CD14-positive monocyte (primary cell): ENCODE measurements at regions of chr17 and their contacts with region 1.

Region 1: GRCh38 chr17:35981908-35982330 is 622 bp upstream of the CCL16 start:
- DNase-seq: no peak
- H3K4me3 ChIP-seq: no peak overlapping the region
- H3K4me3 Mint-ChIP-seq: no peak overlapping the region
- H3K27ac ChIP-seq: no peak overlapping the region
- H3K27ac Mint-ChIP-seq: no peak overlapping the region
- H3K4me1 ChIP-seq: no peaks in the 10 kb centered on the region
- H3K4me1 Mint-ChIP-seq: no peaks in the 10 kb centered on the region
- H3K27me3 ChIP-seq: no peaks in the 10 kb centered on the region
- H3K27me3 Mint-ChIP-seq: peaks cover 0 to 3% (median 0%) of the 10 kb centered on the region in 3 donors
- CTCF ChIP-seq: no peak

Region 2: DNA sequence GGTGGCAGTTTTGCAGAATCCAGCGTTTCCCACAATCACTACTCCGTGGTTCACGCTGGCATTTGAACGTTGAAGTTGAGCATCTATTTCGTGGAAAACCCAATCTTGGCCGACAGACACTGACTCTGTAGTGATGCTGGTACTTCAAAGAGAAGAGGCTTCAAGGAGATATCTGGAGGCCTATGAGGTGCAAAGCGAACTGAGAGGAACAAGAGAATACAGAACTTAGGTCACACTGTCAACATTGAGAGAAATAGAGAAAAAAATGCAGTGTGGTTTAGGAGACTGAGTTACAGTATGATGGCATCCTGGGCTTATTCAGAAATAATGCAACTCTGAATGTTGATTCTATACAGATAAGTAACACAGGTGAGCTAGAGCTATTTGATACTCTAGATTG is 16.6 kb before region 1 on chr17:
- intact Hi-C with region 1: no loop called
- DNase-seq: no peak
- H3K4me3 ChIP-seq: no peak overlapping the region
- H3K4me3 Mint-ChIP-seq: no peak overlapping the region
- H3K27ac ChIP-seq: no peak overlapping the region
- H3K27ac Mint-ChIP-seq: no peak overlapping the region
- H3K4me1 ChIP-seq: no peaks in the 10 kb centered on the region
- H3K4me1 Mint-ChIP-seq: peaks cover 4% of the 10 kb centered on the region
- H3K27me3 ChIP-seq: no peaks in the 10 kb centered on the region
- H3K27me3 Mint-ChIP-seq: peaks cover 5 to 10% (median 8%) of the 10 kb centered on the region in 3 donors
- CTCF ChIP-seq: no peak

Region 3: GRCh38 chr17:36066365-36066985 is 84.6 kb after region 1 on chr17:
- intact Hi-C with region 1: loop called (anchors 5 to 10 kb)
- DNase-seq: no peak
- H3K4me3 ChIP-seq: no peak overlapping the region
- H3K4me3 Mint-ChIP-seq: no peak overlapping the region
- H3K27ac ChIP-seq: no peak overlapping the region
- H3K27ac Mint-ChIP-seq: peak overlapping the region in 1 of 7 donors; percentile 3
- H3K4me1 ChIP-seq: peaks cover 6 to 7% of the 10 kb centered on the region in 2 donors
- H3K4me1 Mint-ChIP-seq: peaks cover 9% of the 10 kb centered on the region
- H3K27me3 ChIP-seq: no peaks in the 10 kb centered on the region
- H3K27me3 Mint-ChIP-seq: peaks cover 1 to 5% (median 2%) of the 10 kb centered on the region in 3 donors
- CTCF ChIP-seq: no peak